GM10248 (cell line): ENCODE measurements at regions of chr9 and their contacts with region 1.

Region 1: GRCh38 chr9:129783516-129784361 is 19.2 kb upstream of the TOR1B start:
- DNase-seq: peak; percentile 88
- CTCF ChIP-seq: peak; percentile 70

Region 2: DNA sequence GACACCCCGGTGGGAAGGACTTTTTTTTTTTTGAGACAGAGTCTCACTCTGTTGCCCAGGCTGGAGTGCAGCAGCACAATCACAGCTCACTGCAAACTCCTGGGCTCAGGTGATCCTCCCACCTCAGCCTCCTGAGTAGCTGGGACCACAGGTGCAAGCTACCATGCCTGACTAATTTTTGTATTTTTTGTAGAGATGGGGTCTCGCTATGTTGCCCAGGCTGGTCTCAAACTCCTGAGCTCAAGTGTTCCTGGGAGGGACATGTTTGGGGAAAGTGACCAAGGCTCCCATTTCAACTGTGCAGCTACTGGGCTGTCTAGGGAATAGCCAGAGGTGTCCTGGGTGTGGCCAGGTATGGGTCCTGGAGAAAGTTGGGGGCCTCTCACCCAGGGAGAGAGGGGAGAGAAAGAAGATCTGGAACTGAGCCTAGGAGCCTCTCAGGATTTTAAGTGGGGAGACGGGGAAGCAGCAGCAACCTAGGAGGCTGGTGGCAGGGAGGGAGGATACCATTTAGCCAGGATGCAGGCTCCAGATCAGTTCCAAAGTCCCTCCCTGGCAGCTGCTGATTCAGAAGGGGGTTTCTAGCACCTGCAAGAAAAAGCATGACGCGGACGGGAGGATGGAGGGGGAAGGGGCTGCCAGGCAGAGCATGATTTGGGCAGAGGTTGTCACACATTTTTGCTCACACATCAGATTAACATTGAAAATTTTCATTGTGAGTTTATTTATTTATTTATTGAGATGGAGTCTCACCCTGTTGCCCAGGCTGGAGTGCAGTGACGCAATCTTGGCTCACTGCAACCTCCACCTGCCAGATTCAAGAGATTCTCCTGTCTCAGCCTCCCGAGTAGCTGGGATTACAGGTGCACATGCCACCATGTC is 12.5 kb after region 1 on chr9:
- CTCF ChIA-PET with region 1: interaction called, 12 read pairs
- POLR2A ChIA-PET with region 1: no interaction called
- DNase-seq: no peak
- CTCF ChIP-seq: no peak